Naive thymus-derived CD4-positive, alpha-beta T cell (primary cell): ENCODE measurements at regions of chr20 and their contacts with region 1.

Region 1: GRCh38 chr20:23937303-23938117 is 51.1 kb downstream of the GGTLC1 start:
- DNase-seq: peak; percentile 43 to 80 (median 70)
- ATAC-seq: peak; percentile 97
- H3K4me3 ChIP-seq: no peak overlapping the region
- H3K4me3 Mint-ChIP-seq: no peak overlapping the region
- H3K27ac ChIP-seq: no peak overlapping the region
- H3K27ac Mint-ChIP-seq: peak overlapping the region in 2 of 9 donors; percentile 25 to 79
- H3K4me1 ChIP-seq: no peaks in the 10 kb centered on the region
- H3K4me1 Mint-ChIP-seq: no peaks in the 10 kb centered on the region
- H3K27me3 ChIP-seq: no peaks in the 10 kb centered on the region
- H3K27me3 Mint-ChIP-seq: peaks cover 0 to 7% (median 0%) of the 10 kb centered on the region in 5 donors

Region 2: DNA sequence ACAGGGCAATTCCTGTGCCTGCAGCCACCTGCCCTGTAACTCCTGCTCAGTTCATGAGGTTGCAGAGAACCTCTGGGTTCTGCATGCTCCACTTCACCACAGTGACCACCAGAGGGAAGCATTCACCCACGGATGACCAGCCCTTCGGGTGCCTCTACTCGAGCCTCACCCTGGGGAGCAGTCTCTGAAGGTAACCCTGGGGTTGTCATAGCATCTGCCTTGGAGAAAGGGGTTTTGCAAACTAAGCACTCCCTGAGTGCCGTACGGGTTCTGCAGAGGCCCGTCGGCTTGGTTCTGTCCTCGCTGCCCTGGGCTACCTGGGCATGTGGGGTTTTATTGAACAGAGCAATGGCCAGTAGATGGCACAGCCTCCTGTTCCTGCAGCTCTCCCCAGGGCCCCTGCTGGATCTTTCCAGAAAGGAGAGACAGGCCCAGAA is 47.7 kb before region 1 on chr20:
- CTCF ChIA-PET with region 1: interaction called, 5 read pairs
- POLR2A ChIA-PET with region 1: no interaction called
- intact Hi-C with region 1: loop called (anchors 1 to 5 kb)
- DNase-seq: peak; percentile 49 to 79 (median 67)
- ATAC-seq: peak; percentile 94
- H3K4me3 ChIP-seq: no peak overlapping the region
- H3K4me3 Mint-ChIP-seq: no peak overlapping the region
- H3K27ac ChIP-seq: no peak overlapping the region
- H3K27ac Mint-ChIP-seq: no peak overlapping the region
- H3K4me1 ChIP-seq: no peaks in the 10 kb centered on the region
- H3K4me1 Mint-ChIP-seq: peaks cover 0 to 4% (median 0%) of the 10 kb centered on the region in 7 donors
- H3K27me3 ChIP-seq: no peaks in the 10 kb centered on the region
- H3K27me3 Mint-ChIP-seq: peaks cover 3 to 17% (median 10%) of the 10 kb centered on the region in 5 donors

Region 3: DNA sequence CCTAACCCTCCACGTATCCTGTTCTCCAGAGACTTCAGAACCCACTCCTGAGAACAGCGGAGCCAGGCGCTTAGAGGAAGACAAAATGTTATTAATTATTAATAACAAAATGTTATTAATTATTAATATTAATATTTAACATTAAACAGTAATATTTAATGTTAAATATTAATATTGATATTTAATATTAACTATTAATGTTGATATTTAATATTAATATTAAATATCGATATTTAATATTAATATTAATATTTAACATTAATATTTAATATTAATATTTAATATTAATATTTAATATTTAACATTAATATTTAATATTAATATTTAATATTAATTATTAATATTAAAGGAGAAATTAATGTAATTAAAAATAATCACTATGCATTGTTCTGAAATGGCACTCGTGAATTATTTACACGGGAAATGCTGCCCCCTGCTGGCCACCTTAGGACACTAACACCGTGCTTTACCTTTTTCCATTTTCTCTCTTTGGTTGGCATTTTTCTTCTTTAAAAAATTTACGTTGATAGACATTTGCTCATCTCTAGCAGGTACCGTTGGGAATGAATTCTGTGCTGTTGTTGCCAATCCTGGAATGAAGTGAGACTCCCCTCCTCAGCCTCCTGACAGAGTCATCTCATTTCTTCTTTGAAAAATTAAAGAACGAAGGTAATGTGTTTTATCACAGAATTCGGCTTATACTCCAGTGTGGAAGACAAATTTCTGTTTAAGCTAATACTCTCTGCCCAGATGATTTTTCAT is 58.6 kb after region 1 on chr20:
- CTCF ChIA-PET with region 1: interaction called, 3 read pairs
- POLR2A ChIA-PET with region 1: no interaction called
- intact Hi-C with region 1: loop called (anchors 1 to 5 kb)
- DNase-seq: peak in 7 of 9 donors; percentile 20 to 61 (median 48)
- ATAC-seq: peak; percentile 57
- H3K4me3 ChIP-seq: no peak overlapping the region
- H3K4me3 Mint-ChIP-seq: peak overlapping the region in 1 of 10 donors; percentile 24
- H3K27ac ChIP-seq: no peak overlapping the region
- H3K27ac Mint-ChIP-seq: peak overlapping the region in 2 of 9 donors; percentile 1 to 9
- H3K4me1 ChIP-seq: no peaks in the 10 kb centered on the region
- H3K4me1 Mint-ChIP-seq: peaks cover 0 to 16% (median 5%) of the 10 kb centered on the region in 7 donors
- H3K27me3 ChIP-seq: no peaks in the 10 kb centered on the region
- H3K27me3 Mint-ChIP-seq: peaks cover 0 to 34% (median 0%) of the 10 kb centered on the region in 5 donors

Region 4: GRCh38 chr20:24160563-24161375 is 223.3 kb after region 1 on chr20:
- CTCF ChIA-PET with region 1: interaction called, 17 read pairs
- POLR2A ChIA-PET with region 1: no interaction called
- intact Hi-C with region 1: loop called in 1 of 2 experiments (anchors 1 kb)
- DNase-seq: peak in 2 of 9 donors; percentile 4 to 16
- ATAC-seq: no peak
- H3K4me3 ChIP-seq: no peak overlapping the region
- H3K4me3 Mint-ChIP-seq: no peak overlapping the region
- H3K27ac ChIP-seq: no peak overlapping the region
- H3K27ac Mint-ChIP-seq: peak overlapping the region in 1 of 9 donors; percentile 23
- H3K4me1 ChIP-seq: no peaks in the 10 kb centered on the region
- H3K4me1 Mint-ChIP-seq: peaks cover 0 to 6% (median 4%) of the 10 kb centered on the region in 7 donors
- H3K27me3 ChIP-seq: no peaks in the 10 kb centered on the region
- H3K27me3 Mint-ChIP-seq: peaks cover 0 to 2% (median 0%) of the 10 kb centered on the region in 5 donors

Region 5: DNA sequence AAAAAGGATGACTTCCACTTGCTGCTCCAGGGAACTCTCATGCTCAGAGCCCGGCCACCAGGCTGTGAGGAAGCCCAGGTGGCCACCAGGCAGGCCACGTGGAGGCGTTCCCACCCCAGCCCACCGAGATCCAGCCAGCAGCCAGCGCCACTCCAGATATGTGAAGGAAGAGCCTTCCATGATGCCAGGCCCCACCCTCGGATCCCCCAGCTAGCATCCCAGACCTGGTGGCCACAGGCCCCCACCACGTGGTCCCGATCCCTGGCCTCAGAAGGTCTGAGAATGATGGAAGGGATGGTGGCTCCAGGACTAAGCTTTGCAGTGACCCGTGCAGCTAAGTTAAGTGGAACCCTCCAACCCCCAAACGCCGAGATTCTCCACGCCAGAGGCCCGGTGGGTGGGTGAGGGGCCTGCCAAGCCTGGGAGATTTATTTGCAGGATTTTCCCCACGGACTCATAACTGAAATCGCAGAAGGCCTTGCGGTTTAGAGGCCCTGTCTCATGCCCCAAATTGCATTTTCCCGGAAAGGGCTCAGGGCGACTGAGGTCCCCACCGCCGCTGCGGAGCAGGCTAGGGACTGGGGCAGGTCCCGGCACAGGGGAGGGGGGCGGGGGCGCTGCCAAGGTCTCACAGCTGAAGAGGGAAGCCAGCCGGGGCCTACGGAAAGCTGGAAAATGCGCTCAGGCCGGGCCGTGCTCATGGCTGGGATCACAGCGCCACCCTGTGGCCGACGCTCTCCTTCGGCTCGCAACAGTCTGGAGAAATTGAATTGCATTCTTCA is 980.5 kb after region 1 on chr20:
- CTCF ChIA-PET with region 1: interaction called, 12 read pairs
- POLR2A ChIA-PET with region 1: no interaction called
- intact Hi-C with region 1: loop called in 1 of 2 experiments (anchors 1 kb)
- DNase-seq: peak in 7 of 9 donors; percentile 18 to 62 (median 26)
- ATAC-seq: peak; percentile 79
- H3K4me3 ChIP-seq: no peak overlapping the region
- H3K4me3 Mint-ChIP-seq: no peak overlapping the region
- H3K27ac ChIP-seq: no peak overlapping the region
- H3K27ac Mint-ChIP-seq: peak overlapping the region in 2 of 9 donors; percentile 5 to 51
- H3K4me1 ChIP-seq: peaks cover 0 to 4% of the 10 kb centered on the region in 2 donors
- H3K4me1 Mint-ChIP-seq: peaks cover 0 to 9% (median 4%) of the 10 kb centered on the region in 7 donors
- H3K27me3 ChIP-seq: no peaks in the 10 kb centered on the region
- H3K27me3 Mint-ChIP-seq: peaks cover 0 to 16% (median 8%) of the 10 kb centered on the region in 5 donors